ENCODE measurements at regions of chr9 and their contacts with region 1.

Region 1: GRCh38 chr9:98848450-98849149 is 41.1 kb downstream of the GALNT12 start:
- DNase-seq: peak; percentile 93
- ATAC-seq: peak; percentile 97
- H3K4me3 ChIP-seq: no peak overlapping the region
- H3K27ac ChIP-seq: no peak overlapping the region
- H3K4me1 ChIP-seq: peaks cover 9 to 39% of the 10 kb centered on the region in 2 experiments; a peak in 3 of 4 replicates
- H3K27me3 ChIP-seq: no peaks in the 10 kb centered on the region
- CTCF ChIP-seq: peak; percentile 90 to 93 (median 91)
- POLR2A ChIP-seq: no peak
- RAD21 ChIP-seq: peak; percentile 97

Region 2: GRCh38 chr9:98807070-98807810 is 41.4 kb before region 1 on chr9 and contains the start of gene GALNT12:
- CTCF ChIA-PET with region 1: interaction called, 14 read pairs
- POLR2A ChIA-PET with region 1: no interaction called
- RAD21 ChIA-PET with region 1: interaction called in 1 of 2 experiments, 3 read pairs
- intact Hi-C with region 1: no loop called
- DNase-seq: no peak
- ATAC-seq: peak; percentile 76
- H3K4me3 ChIP-seq: peak within 1 kb of the TSS; percentile 68 to 79
- H3K27ac ChIP-seq: peak within 1 kb of the TSS; percentile 66
- H3K4me1 ChIP-seq: peaks cover 31 to 52% of the 10 kb centered on the region in 2 experiments
- H3K27me3 ChIP-seq: no peaks in the 10 kb centered on the region
- CTCF ChIP-seq: no peak
- POLR2A ChIP-seq: peak; percentile 38
- RAD21 ChIP-seq: no peak
- total RNA-seq, gene GALNT12: 31.2 TPM

Region 3: DNA sequence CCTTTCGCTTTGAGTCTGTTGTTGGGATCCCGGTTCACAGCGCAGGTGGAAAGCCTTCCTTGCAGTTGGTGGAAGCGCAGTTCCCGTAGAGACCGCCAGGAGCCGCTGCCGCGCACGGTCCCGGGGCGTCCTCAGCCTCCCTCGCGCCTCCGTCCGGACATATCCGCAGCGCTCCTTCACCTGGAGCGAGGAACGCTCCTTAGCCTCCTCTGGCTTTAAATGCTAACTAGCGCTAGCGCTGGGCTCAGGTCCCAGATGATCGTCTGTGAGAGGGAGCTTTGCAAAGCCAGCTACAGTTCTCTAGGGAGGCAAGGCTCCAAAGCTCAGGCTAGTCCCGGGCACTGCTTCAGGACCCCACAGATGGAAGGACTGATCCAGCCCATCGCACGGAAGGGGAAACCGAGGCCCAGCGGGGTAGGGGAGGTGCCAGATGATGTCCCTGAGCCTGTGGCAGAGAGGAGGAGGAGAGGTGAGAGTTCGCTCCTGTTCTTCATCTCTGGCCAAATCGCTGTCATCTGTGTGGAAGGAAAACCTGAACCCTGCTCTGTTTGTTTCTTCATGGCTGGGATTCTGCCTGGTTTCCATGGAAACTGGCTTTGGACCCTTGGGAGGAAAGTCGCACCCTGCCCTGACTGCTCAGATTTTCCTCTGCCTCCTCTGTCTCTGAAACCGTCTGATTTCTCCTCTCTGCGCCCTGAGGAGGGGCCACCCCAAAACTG is 126.6 kb after region 1 on chr9:
- CTCF ChIA-PET with region 1: interaction called, 4 read pairs
- POLR2A ChIA-PET with region 1: no interaction called
- RAD21 ChIA-PET with region 1: no interaction called
- intact Hi-C with region 1: loop called (anchors 1 kb)
- DNase-seq: peak; percentile 61
- ATAC-seq: peak; percentile 94
- H3K4me3 ChIP-seq: peak overlapping the region; percentile 11 to 48
- H3K27ac ChIP-seq: no peak overlapping the region
- H3K4me1 ChIP-seq: peaks cover 0 to 16% of the 10 kb centered on the region in 2 experiments; a peak in 2 of 4 replicates
- H3K27me3 ChIP-seq: no peaks in the 10 kb centered on the region
- CTCF ChIP-seq: peak; percentile 91 to 98 (median 97)
- POLR2A ChIP-seq: no peak
- RAD21 ChIP-seq: peak; percentile 77

Measured in HCT116 (cell line).